Motor neuron (in vitro differentiated cells): ENCODE measurements at regions of chr4 and their contacts with region 1.

Region 1: DNA sequence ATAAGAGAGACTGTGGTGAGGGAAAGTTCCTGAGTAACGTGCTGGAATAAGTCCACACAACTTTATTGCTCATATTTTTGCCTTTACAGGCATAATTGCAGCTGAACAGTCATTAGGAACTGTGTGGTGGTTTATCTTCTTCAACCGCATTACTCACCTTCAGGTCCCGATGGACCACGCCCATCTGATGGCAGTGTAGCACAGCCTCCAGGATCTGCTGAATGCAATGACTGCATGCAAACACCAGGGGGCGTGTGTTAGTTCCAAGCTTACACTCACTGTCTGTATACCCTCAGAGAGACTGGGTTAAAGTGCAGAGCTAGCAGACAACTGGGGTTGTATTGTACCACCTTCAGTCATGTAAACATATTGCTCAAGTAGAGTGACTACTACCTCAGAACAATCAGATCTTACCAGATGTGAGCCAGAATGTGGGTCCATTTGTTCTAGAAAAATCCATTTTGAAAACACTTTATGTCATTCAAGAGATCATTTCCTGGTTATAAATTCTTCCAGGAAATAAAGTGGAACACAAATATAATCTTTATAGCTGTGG is 214.0 kb downstream of the CAMK2D start:
- ATAC-seq: peak; percentile 98 to 100 (median 100)
- H3K4me3 ChIP-seq: no peak overlapping the region
- H3K27ac ChIP-seq: no peak overlapping the region
- H3K4me1 ChIP-seq: peaks cover 0 to 8% of the 10 kb centered on the region in 2 donors

Region 2: GRCh38 chr4:113435893-113436292 is 111.7 kb before region 1 on chr4:
- in situ Hi-C with region 1: no loop called
- ATAC-seq: peak; percentile 50 to 98 (median 93)
- H3K4me3 ChIP-seq: no peak overlapping the region
- H3K27ac ChIP-seq: no peak overlapping the region
- H3K4me1 ChIP-seq: peaks cover 11 to 18% of the 10 kb centered on the region in 2 donors

Region 3: GRCh38 chr4:113761620-113762185 is 214.1 kb after region 1 on chr4 and contains the start of gene CAMK2D:
- in situ Hi-C with region 1: loop called in 1 of 9 experiments (anchors 25 kb)
- ATAC-seq: peak; percentile 40 to 79 (median 76)
- H3K4me3 ChIP-seq: peak within 1 kb of the TSS; percentile 53 to 81 (median 66)
- H3K27ac ChIP-seq: peak within 1 kb of the TSS; percentile 91 to 95
- H3K4me1 ChIP-seq: peaks cover 3 to 9% of the 10 kb centered on the region in 2 donors
- total RNA-seq, gene CAMK2D: 14.5 to 77.2 (median 33.5) TPM